Activated CD8-positive, alpha-beta T cell treated with anti-CD3 and anti-CD28 coated beads for 36 hours (primary cell): ENCODE measurements at regions of chr17 and their contacts with region 1.

Region 1: GRCh38 chr17:49567871-49568694 is 7.6 kb upstream of the NXPH3 start:
- DNase-seq: peak; percentile 90
- ATAC-seq: peak; percentile 61
- H3K4me3 Mint-ChIP-seq: peak overlapping the region; percentile 60
- H3K27ac Mint-ChIP-seq: no peak overlapping the region
- H3K4me1 Mint-ChIP-seq: peaks cover 29% of the 10 kb centered on the region
- H3K27me3 Mint-ChIP-seq: peaks cover 20% of the 10 kb centered on the region
- CTCF ChIP-seq: peak; percentile 97

Region 2: DNA sequence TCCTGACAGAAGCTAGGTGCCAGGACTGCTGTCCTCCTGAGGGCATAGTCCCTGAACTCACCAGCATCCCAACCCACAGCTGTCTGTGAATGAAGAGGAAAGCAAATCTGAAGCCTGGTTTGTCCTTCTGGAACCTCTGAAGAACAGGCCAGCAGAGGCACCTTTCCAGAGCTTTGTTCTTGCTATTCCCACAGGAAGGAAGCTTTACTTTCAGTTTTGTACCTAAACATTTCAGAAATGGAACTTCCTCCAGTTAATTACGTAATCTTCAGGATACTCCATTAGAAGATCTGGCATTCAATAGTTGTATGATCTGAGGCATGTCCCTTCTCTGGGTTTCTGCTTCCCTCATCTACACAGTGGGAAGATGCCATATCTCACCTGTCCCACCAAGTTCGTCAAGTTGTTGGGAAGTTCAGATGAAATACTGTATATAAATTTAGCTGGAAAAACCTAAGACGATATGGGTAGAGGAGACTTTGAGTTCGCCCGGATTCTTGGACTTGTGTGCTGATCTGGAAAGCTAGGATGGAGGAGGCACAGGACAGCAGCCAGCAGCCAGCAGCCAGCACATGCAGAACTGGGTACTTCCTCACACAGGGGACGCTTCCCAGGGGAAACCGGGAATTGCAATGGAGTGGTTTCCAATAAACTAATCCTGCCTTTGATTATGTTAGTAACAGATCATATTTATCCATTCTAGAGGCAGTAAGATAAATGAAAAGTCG is 30.0 kb after region 1 on chr17:
- CTCF ChIA-PET with region 1: interaction called, 10 read pairs
- POLR2A ChIA-PET with region 1: no interaction called
- intact Hi-C with region 1: no loop called
- DNase-seq: no peak
- ATAC-seq: no peak
- H3K4me3 Mint-ChIP-seq: no peak overlapping the region
- H3K27ac Mint-ChIP-seq: no peak overlapping the region
- H3K4me1 Mint-ChIP-seq: peaks cover 2% of the 10 kb centered on the region
- H3K27me3 Mint-ChIP-seq: no peaks in the 10 kb centered on the region
- CTCF ChIP-seq: no peak